ENCODE measurements at regions of chr20 and their contacts with region 1.

Region 1: DNA sequence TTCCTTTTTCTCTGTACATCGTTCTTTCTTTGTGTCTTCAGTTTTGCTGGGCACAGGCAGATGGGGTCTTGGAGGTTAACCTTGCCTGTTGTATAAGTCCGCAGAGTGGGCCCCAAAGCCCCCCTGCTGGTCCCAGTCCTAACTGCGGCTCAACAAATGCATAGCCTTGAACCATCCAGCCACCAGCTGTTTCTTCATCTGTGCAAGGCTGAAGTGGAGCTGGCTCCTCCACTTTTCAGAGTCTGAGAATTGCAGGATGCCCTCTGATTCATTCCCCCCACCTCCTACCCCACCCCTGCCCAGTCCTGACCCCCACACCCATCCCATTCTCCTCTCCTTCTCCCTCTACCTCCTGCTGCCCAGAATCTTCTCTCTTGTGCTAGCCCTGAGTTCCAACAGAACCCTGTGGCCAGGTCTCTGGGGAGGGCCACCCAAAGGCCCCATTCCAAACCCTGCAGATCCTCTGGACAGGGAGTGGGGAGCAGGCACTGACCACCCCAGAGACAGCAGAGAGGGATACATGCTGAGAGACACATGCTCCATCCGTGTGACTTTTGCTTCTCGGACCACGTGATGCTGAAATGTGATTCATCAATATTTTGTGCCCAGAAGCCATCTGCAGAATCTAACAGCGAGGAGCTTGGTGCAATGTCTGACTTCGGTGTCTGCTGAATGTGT is 386.5 kb upstream of the SULF2 start:
- DNase-seq: peak in 1 of 10 donors; percentile 37
- H3K4me3 ChIP-seq: no peak overlapping the region
- H3K27ac ChIP-seq: peak overlapping the region in 14 of 59 donors; percentile 4 to 63 (median 36)
- H3K27me3 ChIP-seq: peaks cover 0 to 9% (median 0%) of the 10 kb centered on the region in 45 donors
- CTCF ChIP-seq: no peak

Region 2: GRCh38 chr20:48112845-48113560 is 58.8 kb before region 1 on chr20:
- intact Hi-C with region 1: loop called in 1 of 2 experiments (anchors 10 kb)
- DNase-seq: no peak
- H3K4me3 ChIP-seq: no peak overlapping the region
- H3K27ac ChIP-seq: no peak overlapping the region
- H3K27me3 ChIP-seq: peaks cover 0 to 4% (median 0%) of the 10 kb centered on the region in 45 donors
- CTCF ChIP-seq: no peak

Region 3: DNA sequence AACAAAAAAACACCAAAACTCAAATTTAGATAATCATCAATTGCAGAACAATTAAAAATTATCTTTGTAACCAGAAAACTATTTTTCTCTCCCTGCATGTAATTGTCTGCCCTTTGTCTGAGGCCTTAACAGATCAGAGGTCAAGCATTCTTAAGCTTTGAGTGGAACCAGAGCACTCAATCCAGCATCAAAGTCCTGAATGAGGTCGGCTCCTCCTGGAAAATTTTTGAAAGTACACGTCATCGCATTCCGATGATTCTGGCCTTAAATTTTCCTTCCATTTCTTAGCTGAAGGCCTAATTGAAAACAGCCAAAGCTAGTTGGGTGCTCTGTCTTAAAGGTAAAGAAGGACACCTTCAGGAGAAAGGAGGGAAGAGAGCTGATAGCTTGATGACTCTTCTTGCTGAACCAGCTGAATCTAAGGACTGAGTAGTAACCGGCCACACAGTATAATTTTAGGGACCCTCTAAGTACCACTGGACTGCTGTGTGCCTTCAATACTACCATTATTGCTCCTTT is 123.7 kb after region 1 on chr20:
- intact Hi-C with region 1: loop called in 1 of 2 experiments (anchors 10 kb)
- DNase-seq: no peak
- H3K4me3 ChIP-seq: peak overlapping the region in 1 of 59 donors; percentile 26
- H3K27ac ChIP-seq: peak overlapping the region in 18 of 59 donors; percentile 5 to 65 (median 34)
- H3K27me3 ChIP-seq: no peaks in the 10 kb centered on the region
- CTCF ChIP-seq: peak in 27 of 56 donors; percentile 11 to 41 (median 25)

Region 4: DNA sequence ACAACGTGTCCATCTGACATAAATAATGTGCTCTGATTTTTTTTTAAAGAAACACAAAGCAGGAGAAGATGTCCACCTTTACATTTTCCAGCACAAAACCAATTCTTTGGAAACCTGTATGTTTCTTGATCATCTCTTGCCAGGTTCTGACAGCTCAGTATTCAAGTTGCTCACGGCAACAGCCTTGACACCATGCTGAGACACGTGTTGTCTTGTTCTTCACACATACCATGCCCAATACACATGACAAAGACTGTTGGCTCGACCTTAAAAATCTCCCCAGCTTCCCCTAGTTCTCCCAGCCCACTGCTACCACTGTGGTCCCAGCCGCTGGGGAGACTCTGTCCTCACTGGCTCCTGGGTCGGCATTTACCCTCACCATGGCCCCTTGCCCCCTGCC is 137.1 kb after region 1 on chr20:
- intact Hi-C with region 1: no loop called
- DNase-seq: no peak
- H3K4me3 ChIP-seq: no peak overlapping the region
- H3K27ac ChIP-seq: no peak overlapping the region
- H3K27me3 ChIP-seq: no peaks in the 10 kb centered on the region
- CTCF ChIP-seq: no peak

Measured in dorsolateral prefrontal cortex (tissue), 120 donors.